GM18951 (cell line): ENCODE measurements at regions of chr10 and their contacts with region 1.

Region 1: GRCh38 chr10:18104223-18104872 is 35.9 kb upstream of the CACNB2 start:
- POLR2A ChIP-seq: no peak

Region 2: GRCh38 chr10:17617031-17617911 is 487.1 kb before region 1 on chr10 and contains the start of gene HACD1:
- in situ Hi-C with region 1: loop called (anchors 25 kb)
- POLR2A ChIP-seq: peak; percentile 53

Region 3: GRCh38 chr10:17787078-17787961 is 317.0 kb before region 1 on chr10:
- in situ Hi-C with region 1: no loop called
- POLR2A ChIP-seq: no peak

Region 4: GRCh38 chr10:18043148-18044006 is 61.0 kb before region 1 on chr10:
- in situ Hi-C with region 1: no loop called
- POLR2A ChIP-seq: no peak